ENCODE measurements at regions of chr2 and their contacts with region 1.

Region 1: DNA sequence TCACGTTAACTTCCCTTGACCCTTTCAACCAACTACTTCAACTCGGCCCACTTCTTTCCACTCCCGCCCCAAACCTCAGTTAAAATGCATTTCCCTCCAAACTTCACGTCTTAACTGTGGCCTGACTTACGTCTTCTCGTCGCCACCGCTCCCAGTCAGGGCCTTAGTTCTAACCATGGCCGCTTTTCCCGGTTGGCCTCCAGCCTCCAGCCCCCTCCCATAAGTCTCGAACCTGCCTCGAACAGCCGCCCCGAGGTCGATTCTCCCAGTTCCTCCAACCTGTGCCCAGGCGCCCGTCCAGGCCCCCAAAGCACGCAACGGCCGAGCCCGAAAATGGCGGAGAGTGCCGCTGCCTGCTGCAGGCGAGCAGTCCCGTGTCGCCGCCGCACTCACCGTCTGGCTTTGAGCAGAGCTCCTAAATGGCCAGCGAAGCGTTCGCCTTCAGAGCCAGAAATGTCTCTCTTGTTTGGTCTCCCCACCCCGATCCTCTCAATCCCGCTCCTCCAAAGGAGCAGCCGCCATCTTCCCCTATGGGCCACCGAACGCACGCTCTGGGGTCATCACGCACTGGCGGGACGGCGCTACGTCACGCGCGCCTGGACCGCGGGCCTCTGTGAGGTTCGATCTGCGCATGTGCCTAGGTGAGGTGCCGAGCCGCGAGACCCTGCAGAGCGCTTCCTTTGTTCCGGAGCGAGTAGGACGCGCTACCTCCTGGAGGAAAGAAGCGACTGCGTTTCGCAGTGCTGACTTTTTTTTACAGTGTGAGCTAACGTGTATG is at the start of gene WDR33:
- DNase-seq: peak; percentile 66
- ATAC-seq: peak; percentile 99
- H3K4me3 ChIP-seq: peak within 1 kb of the TSS; percentile 84 to 88
- H3K27ac ChIP-seq: peak within 1 kb of the TSS; percentile 98
- H3K4me1 ChIP-seq: peaks cover 18% of the 10 kb centered on the region; the same call in 1 of the 2 replicates
- H3K27me3 ChIP-seq: no peaks in the 10 kb centered on the region
- CTCF ChIP-seq: no peak; the same call in 1 of the 2 replicates
- total RNA-seq, gene WDR33: 63.7 TPM

Region 2: GRCh38 chr2:127636248-127637235 is 174.3 kb before region 1 on chr2:
- CTCF ChIA-PET with region 1: no interaction called
- POLR2A ChIA-PET with region 1: interaction called, 12 read pairs
- in situ Hi-C with region 1: no loop called
- intact Hi-C with region 1: no loop called
- DNase-seq: no peak
- ATAC-seq: no peak
- H3K4me3 ChIP-seq: no peak overlapping the region
- H3K27ac ChIP-seq: no peak overlapping the region
- H3K4me1 ChIP-seq: peaks cover 10% of the 10 kb centered on the region
- H3K27me3 ChIP-seq: no peaks in the 10 kb centered on the region
- CTCF ChIP-seq: no peak

Region 3: GRCh38 chr2:127702395-127703009 is 108.3 kb before region 1 on chr2:
- CTCF ChIA-PET with region 1: interaction called, 12 read pairs
- POLR2A ChIA-PET with region 1: no interaction called
- in situ Hi-C with region 1: no loop called
- intact Hi-C with region 1: no loop called
- DNase-seq: no peak
- ATAC-seq: no peak
- H3K4me3 ChIP-seq: peak overlapping the region; percentile 57 to 86
- H3K27ac ChIP-seq: peak overlapping the region; percentile 96
- H3K4me1 ChIP-seq: peaks cover 22% of the 10 kb centered on the region
- H3K27me3 ChIP-seq: no peaks in the 10 kb centered on the region
- CTCF ChIP-seq: no peak

Measured in Panc1 (cell line).